Panc1 (cell line): ENCODE measurements at regions of chr2 and their contacts with region 1.

Region 1: GRCh38 chr2:108194409-108195132 is 45.2 kb upstream of the SULT1C3 start:
- DNase-seq: no peak
- ATAC-seq: no peak
- H3K4me3 ChIP-seq: no peak overlapping the region
- H3K27ac ChIP-seq: no peak overlapping the region
- H3K4me1 ChIP-seq: no peaks in the 10 kb centered on the region
- H3K27me3 ChIP-seq: no peaks in the 10 kb centered on the region
- CTCF ChIP-seq: peak; percentile 58; the same call in 1 of the 2 replicates

Region 2: DNA sequence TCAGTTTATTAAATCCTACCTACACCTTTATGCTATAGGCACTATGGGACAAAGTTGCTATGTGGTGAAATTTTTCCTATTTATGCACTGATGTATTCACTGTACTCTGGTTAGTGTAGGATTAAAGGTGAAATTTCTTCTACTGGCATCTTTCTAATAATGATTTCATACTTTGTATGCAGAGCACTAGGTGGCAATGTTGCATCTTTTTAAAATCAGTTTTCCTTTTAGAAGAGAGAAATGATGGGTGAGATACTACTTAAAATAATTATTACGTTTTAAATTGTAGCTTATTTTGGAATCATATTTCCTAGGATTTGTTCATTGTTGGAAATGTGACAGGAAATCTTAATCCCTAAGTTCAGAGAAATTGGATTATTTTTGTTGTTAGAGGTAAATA is 1556.5 kb before region 1 on chr2:
- CTCF ChIA-PET with region 1: no interaction called
- POLR2A ChIA-PET with region 1: no interaction called
- in situ Hi-C with region 1: no loop called
- intact Hi-C with region 1: loop called (anchors 10 kb)
- DNase-seq: no peak
- ATAC-seq: no peak
- H3K4me3 ChIP-seq: no peak overlapping the region
- H3K27ac ChIP-seq: no peak overlapping the region
- H3K4me1 ChIP-seq: no peaks in the 10 kb centered on the region
- H3K27me3 ChIP-seq: no peaks in the 10 kb centered on the region; the same call in 1 of the 2 replicates
- CTCF ChIP-seq: peak; percentile 47; the same call in 1 of the 2 replicates

Region 3: GRCh38 chr2:108013305-108013704 is 181.3 kb before region 1 on chr2:
- CTCF ChIA-PET with region 1: no interaction called
- POLR2A ChIA-PET with region 1: no interaction called
- in situ Hi-C with region 1: no loop called
- intact Hi-C with region 1: no loop called
- DNase-seq: no peak
- ATAC-seq: no peak
- H3K4me3 ChIP-seq: no peak overlapping the region
- H3K27ac ChIP-seq: no peak overlapping the region
- H3K4me1 ChIP-seq: no peaks in the 10 kb centered on the region
- H3K27me3 ChIP-seq: no peaks in the 10 kb centered on the region
- CTCF ChIP-seq: no peak

Region 4: DNA sequence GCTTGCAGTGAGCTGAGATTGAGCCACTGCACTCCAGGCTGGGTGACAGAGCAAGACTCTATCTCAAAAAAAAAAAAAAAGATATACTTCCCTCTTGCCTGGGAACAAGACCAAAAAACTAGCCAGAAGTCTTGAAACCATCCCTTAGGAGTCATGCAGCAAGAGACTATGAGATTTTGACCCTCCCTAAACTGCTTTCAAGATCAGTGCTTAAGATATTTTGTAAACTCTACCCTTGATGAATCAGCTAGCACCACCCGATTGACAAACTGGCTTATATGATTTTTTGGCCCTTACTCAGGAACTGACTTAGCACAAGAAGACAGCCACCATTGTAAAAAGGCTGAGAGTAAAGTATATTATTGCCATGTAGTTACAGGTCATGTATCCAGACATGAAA is 49.0 kb after region 1 on chr2:
- CTCF ChIA-PET with region 1: no interaction called
- POLR2A ChIA-PET with region 1: no interaction called
- in situ Hi-C with region 1: no loop called
- intact Hi-C with region 1: no loop called
- DNase-seq: no peak
- ATAC-seq: no peak
- H3K4me3 ChIP-seq: no peak overlapping the region
- H3K27ac ChIP-seq: no peak overlapping the region
- H3K4me1 ChIP-seq: no peaks in the 10 kb centered on the region
- H3K27me3 ChIP-seq: no peaks in the 10 kb centered on the region
- CTCF ChIP-seq: no peak

Region 5: DNA sequence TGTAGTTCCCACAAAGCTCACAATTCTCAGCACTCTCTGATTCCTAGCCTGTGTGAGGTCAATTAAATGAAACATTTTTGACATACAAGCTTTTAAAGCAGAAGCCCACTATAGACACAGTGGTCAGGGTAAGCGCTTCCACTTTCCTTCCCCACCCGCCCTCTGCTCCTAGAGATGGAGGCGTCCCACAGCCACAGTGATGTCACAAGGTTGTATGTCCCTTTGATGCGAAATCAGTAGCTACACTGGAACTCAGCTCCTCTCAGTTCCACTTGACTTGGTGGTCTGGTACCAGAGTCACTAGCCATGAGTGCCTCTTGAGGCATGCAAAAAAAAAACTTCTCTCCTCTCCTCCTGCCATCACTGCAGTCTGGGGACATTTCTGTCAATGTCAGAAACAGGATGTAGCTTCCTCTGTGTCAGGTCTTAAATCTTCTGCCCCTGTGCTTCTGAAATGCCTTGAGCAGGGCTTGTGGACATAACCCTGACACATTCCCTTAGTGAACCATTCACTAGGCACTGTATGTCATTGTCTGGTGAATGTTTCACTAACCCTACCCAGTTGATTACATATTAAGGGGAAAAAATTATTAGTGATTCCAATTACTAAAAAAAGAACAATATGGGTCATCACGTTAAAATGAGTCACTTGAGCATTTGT is 191.0 kb after region 1 on chr2:
- CTCF ChIA-PET with region 1: no interaction called
- POLR2A ChIA-PET with region 1: no interaction called
- in situ Hi-C with region 1: no loop called
- intact Hi-C with region 1: no loop called
- DNase-seq: no peak
- ATAC-seq: no peak
- H3K4me3 ChIP-seq: no peak overlapping the region
- H3K27ac ChIP-seq: no peak overlapping the region
- H3K4me1 ChIP-seq: no peaks in the 10 kb centered on the region
- H3K27me3 ChIP-seq: no peaks in the 10 kb centered on the region
- CTCF ChIP-seq: no peak

Region 6: DNA sequence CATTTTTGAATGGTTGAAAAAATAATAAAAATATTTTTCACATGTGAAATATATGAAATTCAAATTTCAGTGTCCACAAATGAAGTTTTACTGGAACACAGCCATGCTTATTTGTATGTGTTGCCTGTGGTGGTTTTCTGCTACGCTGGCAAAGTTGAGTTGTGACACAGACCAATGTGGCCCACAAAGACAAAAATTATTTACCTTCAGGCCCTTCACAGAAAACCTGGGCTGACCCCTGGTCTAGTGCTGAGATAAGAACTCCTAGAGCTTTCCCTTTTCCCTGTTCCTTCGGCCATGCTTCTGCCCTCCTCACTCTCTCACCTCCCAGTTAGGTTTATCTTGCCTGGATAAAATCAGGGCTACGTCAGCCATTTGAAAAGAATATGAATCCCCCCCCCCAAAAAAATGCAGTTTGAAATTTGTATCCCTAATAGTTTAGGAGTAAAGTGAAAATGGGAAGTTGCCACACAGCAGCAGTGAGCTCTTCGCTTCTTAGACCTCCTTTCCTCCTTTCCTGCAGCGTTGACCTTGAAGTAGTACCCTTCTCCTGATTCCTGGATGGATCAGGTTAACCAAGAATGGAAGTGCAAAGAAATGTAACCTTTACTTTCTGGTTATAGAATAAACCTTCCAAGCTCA is 430.7 kb after region 1 on chr2:
- CTCF ChIA-PET with region 1: no interaction called
- POLR2A ChIA-PET with region 1: interaction called, 11 read pairs
- in situ Hi-C with region 1: no loop called
- intact Hi-C with region 1: no loop called
- DNase-seq: no peak
- ATAC-seq: no peak
- H3K4me3 ChIP-seq: no peak overlapping the region
- H3K27ac ChIP-seq: peak overlapping the region; percentile 78
- H3K4me1 ChIP-seq: peaks cover 50% of the 10 kb centered on the region
- H3K27me3 ChIP-seq: no peaks in the 10 kb centered on the region
- CTCF ChIP-seq: no peak